ENCODE measurements at regions of chr6 and their contacts with region 1.

Region 1: DNA sequence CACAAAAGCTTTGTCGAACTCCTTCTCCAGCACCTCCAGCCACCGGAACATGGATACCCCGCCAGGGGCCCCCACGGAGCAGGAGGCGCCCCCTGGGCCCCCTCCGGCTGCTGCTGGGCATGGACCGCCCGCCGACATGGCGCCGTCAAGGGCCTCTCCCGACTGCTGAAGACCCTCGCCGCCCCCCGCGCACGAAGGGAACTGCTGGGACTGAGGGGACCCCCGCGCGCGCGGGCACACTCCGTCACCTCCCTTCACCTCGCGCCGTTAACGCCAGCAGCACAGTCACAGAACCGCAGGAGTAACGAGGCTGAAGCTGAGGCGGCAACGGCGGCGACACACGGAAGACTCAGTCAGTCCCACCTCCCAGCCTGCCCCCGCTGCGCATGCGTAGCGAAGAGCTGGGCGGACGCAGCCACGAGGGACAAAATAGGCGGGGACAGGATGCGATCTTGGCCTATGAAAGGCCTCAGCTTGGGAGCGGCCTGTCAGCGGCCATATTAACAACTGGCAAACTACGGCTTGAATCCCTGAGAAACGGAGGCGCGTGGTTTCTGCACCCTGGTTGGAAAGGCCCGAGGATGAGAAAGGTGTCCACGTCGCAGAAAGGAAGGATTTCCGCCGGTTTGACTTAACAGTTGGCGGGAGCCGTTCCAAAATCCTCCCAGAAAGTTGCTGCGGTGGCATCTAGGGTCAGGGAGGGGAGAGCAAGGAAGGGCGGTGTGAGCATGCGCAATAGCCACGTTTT is at the start of gene GOPC:
- DNase-seq: peak; percentile 98
- H3K4me3 ChIP-seq: peak within 1 kb of the TSS; percentile 76 to 87 (median 78)
- H3K27ac ChIP-seq: peak within 1 kb of the TSS; percentile 76
- H3K4me1 ChIP-seq: peaks cover 9% of the 10 kb centered on the region
- H3K27me3 ChIP-seq: no peaks in the 10 kb centered on the region
- CTCF ChIP-seq: peak in 1 of 2 donors; percentile 15
- total RNA-seq, gene GOPC: 43.2 to 72.5 TPM

Region 2: DNA sequence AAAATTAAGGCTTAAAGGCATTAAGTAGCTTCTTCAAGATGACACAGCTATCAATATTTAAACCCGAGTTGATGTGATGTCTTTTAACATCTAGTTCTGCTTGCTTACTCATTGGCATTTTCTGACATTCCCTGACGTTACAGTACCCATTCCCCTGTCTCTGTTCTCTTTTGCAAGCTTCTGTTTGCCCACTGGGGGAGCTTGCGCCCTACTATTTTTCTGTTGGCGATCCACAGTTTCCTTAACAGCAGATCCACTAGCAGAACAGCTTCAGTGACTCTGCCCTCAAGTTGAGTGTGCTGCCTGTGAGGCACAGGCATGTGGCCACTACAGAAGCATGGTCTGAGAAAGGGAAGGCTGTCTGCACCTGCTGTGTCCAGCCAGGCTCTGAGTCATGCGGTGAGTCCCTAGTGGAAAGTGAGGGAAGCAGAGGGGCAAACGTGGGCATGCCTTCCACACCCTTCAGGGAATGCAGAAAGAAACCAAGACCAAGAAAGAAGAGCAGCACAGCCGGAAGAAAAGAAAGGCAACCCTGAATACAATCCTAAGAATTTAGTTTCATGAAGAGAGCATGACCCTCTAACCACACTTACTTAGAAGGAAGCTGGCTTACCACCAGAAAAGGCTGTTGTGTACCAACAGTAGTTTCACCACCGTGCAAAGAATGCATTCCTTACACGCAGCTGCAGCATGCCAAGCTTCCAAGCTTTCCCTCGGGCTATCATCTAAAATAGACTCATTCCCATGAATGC is 434.6 kb before region 1 on chr6:
- CTCF ChIA-PET with region 1: no interaction called
- dilution Hi-C with region 1: no loop called
- in situ Hi-C with region 1: no loop called
- intact Hi-C with region 1: loop called (anchors 10 kb)
- DNase-seq: peak; percentile 99
- H3K4me3 ChIP-seq: no peak overlapping the region
- H3K27ac ChIP-seq: peak overlapping the region; percentile 69
- H3K4me1 ChIP-seq: peaks cover 38% of the 10 kb centered on the region
- H3K27me3 ChIP-seq: no peaks in the 10 kb centered on the region
- CTCF ChIP-seq: peak; percentile 17 to 35

Region 3: GRCh38 chr6:117352466-117353081 is 249.8 kb before region 1 on chr6:
- CTCF ChIA-PET with region 1: no interaction called
- dilution Hi-C with region 1: no loop called
- in situ Hi-C with region 1: loop called (anchors 5 to 10 kb)
- intact Hi-C with region 1: loop called (anchors 1 kb)
- DNase-seq: peak; percentile 14
- H3K4me3 ChIP-seq: no peak overlapping the region
- H3K27ac ChIP-seq: no peak overlapping the region
- H3K4me1 ChIP-seq: peaks cover 4% of the 10 kb centered on the region
- H3K27me3 ChIP-seq: no peaks in the 10 kb centered on the region
- CTCF ChIP-seq: peak; percentile 74 to 79

Region 4: GRCh38 chr6:117449549-117450439 is 152.5 kb before region 1 on chr6:
- CTCF ChIA-PET with region 1: interaction called, 3 read pairs
- dilution Hi-C with region 1: no loop called
- in situ Hi-C with region 1: loop called in 1 of 2 experiments (anchors 5 kb)
- intact Hi-C with region 1: loop called (anchors 1 kb)
- DNase-seq: peak; percentile 50
- H3K4me3 ChIP-seq: no peak overlapping the region
- H3K27ac ChIP-seq: peak overlapping the region; percentile 98
- H3K4me1 ChIP-seq: peaks cover 39% of the 10 kb centered on the region
- H3K27me3 ChIP-seq: no peaks in the 10 kb centered on the region
- CTCF ChIP-seq: peak; percentile 67 to 68

Region 5: GRCh38 chr6:117555882-117556498 is 46.3 kb before region 1 on chr6:
- CTCF ChIA-PET with region 1: interaction called, 5 read pairs
- dilution Hi-C with region 1: no loop called
- in situ Hi-C with region 1: no loop called
- intact Hi-C with region 1: loop called (anchors 2 kb)
- DNase-seq: peak; percentile 32
- H3K4me3 ChIP-seq: no peak overlapping the region
- H3K27ac ChIP-seq: no peak overlapping the region
- H3K4me1 ChIP-seq: peaks cover 18% of the 10 kb centered on the region
- H3K27me3 ChIP-seq: no peaks in the 10 kb centered on the region
- CTCF ChIP-seq: peak; percentile 73 to 84

Region 6: DNA sequence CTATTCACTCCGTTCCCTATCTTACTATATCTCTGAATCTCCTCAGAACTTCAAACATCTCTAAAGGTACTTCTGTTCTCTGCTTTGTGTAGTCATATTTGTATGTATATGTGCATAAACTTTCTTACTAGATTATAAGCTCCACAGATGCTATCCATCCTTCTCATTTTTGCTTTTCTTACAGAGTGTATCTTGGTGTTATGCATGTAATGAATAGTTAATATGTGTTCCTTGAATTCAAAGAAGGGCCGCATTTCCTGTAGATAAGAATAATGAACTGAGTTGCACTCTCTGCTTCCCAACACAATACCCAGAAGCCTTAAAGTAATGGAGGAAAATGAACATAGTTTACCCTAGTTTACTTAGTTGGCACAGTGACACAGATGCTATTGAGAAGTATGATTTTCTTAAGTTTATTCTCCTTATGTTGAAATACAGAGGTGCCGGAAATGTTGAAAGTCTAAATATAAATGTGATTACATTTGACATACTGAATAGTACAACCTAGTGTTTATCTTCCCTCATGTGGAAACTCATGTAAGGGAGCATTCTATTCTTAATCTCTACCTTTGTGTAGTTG is 78.9 kb after region 1 on chr6:
- CTCF ChIA-PET with region 1: no interaction called
- dilution Hi-C with region 1: no loop called
- in situ Hi-C with region 1: no loop called
- intact Hi-C with region 1: no loop called
- DNase-seq: no peak
- H3K4me3 ChIP-seq: no peak overlapping the region
- H3K27ac ChIP-seq: no peak overlapping the region
- H3K4me1 ChIP-seq: peaks cover 21% of the 10 kb centered on the region
- H3K27me3 ChIP-seq: no peaks in the 10 kb centered on the region
- CTCF ChIP-seq: no peak

Measured in mammary epithelial cell (primary cell).